ENCODE measurements at regions of chr1 and their contacts with region 1.

Region 1: GRCh38 chr1:2412519-2413233 is at the start of gene PEX10:
- DNase-seq: peak; percentile 99
- H3K4me3 Mint-ChIP-seq: peak within 1 kb of the TSS; percentile 90
- H3K27ac Mint-ChIP-seq: peak within 1 kb of the TSS; percentile 88
- H3K4me1 Mint-ChIP-seq: peaks cover 27% of the 10 kb centered on the region
- H3K27me3 Mint-ChIP-seq: no peaks in the 10 kb centered on the region
- total RNA-seq, gene PEX10: 17.6 and 18.2 TPM in 2 replicates

Region 2: DNA sequence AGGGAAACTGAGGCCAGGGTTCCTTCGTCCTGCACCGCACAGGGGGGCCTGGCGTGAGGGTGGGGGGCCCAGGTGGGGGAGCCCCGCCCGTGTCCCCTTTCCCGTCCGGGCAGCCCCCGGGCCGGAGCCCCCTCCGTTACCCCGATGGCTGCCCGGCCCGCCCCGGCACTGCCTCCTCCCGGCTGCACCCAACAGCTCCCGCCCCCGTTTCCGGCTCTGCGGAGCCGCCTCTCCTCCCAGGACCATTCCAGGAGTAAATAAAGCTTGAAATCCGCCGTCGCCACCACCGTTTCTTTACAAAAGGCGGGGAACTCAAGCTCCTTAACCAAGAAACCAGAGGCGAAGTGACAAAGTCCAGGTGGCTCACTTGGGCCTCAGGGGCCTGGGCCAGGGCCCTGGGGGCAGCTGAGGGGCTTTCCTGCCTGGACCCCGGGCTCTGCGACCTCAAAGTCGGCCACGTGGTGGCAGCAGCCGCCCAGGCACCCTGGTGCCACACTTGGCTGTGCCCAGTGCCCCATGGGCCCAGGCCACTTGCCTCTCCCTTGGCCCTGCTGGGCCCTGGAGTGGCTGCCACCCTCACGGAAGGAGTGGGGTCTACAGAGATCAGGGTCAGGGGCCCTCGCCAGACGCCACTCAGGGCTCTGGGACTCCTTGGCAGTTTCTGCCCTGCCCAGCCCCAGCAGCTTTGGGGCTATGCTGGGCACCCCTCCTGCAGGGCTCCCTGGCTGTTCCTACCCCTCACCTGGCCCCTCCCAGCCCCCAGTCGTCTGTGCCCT is 217.6 kb before region 1 on chr1:
- intact Hi-C with region 1: loop called (anchors 1 kb)
- DNase-seq: peak; percentile 91
- H3K4me3 Mint-ChIP-seq: peak overlapping the region; percentile 84
- H3K27ac Mint-ChIP-seq: peak overlapping the region; percentile 92
- H3K4me1 Mint-ChIP-seq: peaks cover 16% of the 10 kb centered on the region
- H3K27me3 Mint-ChIP-seq: no peaks in the 10 kb centered on the region

Region 3: GRCh38 chr1:2425892-2426291 is 13.2 kb after region 1 on chr1:
- intact Hi-C with region 1: loop called (anchors 1 kb)
- DNase-seq: no peak
- H3K4me3 Mint-ChIP-seq: no peak overlapping the region
- H3K27ac Mint-ChIP-seq: no peak overlapping the region
- H3K4me1 Mint-ChIP-seq: no peaks in the 10 kb centered on the region
- H3K27me3 Mint-ChIP-seq: no peaks in the 10 kb centered on the region

Region 4: GRCh38 chr1:2443277-2444137 is 30.8 kb after region 1 on chr1:
- intact Hi-C with region 1: no loop called
- DNase-seq: no peak
- H3K4me3 Mint-ChIP-seq: no peak overlapping the region
- H3K27ac Mint-ChIP-seq: no peak overlapping the region
- H3K4me1 Mint-ChIP-seq: no peaks in the 10 kb centered on the region
- H3K27me3 Mint-ChIP-seq: peaks cover 8% of the 10 kb centered on the region

Region 5: GRCh38 chr1:2545759-2546514 is 133.3 kb after region 1 on chr1:
- intact Hi-C with region 1: loop called (anchors 1 kb)
- DNase-seq: peak; percentile 86
- H3K4me3 Mint-ChIP-seq: peak overlapping the region; percentile 85
- H3K27ac Mint-ChIP-seq: no peak overlapping the region
- H3K4me1 Mint-ChIP-seq: peaks cover 15% of the 10 kb centered on the region
- H3K27me3 Mint-ChIP-seq: peaks cover 7% of the 10 kb centered on the region

Region 6: DNA sequence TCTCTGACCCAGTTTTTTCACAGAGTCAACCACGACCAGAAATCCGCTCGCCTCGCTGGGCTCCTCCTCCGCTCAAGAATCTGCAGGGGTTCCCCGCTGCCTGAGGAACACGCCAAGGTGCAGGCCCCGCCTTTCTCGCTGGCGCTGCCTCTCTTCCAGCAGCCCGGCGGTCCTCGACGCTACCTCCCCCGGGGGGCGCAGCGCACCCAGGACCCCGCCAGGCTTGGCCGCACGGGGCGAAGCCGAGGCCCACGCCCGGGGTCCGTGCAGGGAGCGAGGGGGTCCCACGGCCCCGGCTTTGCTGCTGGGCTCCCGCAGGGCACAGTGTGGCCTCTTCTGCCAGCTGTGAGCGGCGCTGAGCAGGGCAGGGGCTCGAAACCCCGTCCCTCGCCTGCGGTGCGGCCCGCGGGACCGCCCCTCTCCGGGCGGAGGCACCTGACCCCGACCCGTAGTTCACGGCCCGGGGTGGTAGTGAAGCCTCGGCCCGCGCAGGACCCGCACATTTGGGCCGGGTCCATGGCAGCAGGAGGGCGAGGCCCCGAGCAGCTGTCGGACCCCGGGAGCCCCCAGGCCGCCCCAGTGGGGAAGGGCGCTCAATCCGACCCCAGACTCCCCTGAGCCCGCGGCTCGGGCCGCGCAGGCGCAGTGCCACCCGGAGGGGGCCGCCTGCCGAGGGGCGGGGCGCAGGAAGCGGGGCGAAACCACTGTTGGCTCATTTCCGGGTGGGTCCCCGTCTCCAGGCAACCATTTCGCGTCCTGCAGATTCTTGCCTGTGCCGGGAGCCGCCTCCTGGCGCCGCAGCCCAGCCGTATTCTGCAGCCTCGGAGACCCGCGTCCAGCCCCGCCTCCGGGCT is 230.1 kb after region 1 on chr1:
- intact Hi-C with region 1: loop called (anchors 10 kb)
- DNase-seq: peak; percentile 92
- H3K4me3 Mint-ChIP-seq: peak overlapping the region; percentile 85
- H3K27ac Mint-ChIP-seq: peak overlapping the region; percentile 88
- H3K4me1 Mint-ChIP-seq: no peaks in the 10 kb centered on the region
- H3K27me3 Mint-ChIP-seq: no peaks in the 10 kb centered on the region